Esophagus muscularis mucosa (tissue), 4 donors: ENCODE measurements at regions of chr10 and their contacts with region 1.

Region 1: DNA sequence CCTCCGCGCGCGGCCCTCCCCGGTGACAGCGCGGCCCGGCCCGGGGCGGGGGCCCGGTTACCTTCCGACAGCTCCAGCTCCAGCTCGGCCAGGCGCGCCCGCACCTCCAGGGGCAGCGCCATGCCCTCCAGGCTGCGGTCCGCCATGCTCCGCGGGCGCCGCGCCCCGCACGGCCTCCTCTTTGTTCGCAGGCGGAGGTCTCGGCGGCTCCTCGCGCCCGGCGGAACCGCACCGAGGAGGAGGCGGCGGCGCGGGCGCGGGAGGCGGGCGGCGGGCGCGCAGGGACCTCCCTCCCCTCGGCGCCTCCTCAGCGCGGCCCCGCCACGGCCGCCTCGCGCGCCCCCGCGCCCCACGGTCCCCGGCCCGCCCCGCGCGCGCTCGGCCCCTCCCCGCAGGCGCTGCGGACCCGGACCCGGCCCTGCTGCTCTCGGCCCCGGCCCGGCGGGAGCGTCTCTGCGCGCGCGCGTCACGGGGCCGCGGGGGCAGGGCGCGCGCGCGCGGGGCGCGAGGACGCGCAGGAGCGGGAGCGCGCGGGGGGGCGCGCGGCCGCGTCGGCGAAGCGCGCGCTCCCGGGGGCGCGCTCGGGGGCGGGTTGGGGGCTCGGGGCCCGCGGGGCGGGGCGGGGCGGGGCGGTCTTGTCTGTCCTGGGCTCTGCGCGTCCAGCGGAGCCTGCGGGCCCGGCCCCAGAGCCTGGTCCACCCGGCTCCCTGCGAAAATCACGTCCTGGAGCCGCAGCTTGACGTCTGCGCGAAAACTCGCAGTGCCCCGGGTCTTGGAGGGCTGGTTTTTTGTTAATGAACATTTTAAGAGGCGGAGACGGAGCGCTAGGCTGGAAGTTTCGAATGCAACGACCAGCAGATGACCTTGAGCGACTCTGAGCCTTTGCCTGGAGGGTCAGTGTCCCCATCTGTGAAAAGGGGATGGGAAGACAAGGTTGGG is at the start of gene DIP2C:
- DNase-seq: peak; percentile 92
- H3K4me3 ChIP-seq: peak within 1 kb of the TSS; percentile 76 to 92 (median 86)
- H3K27ac ChIP-seq: peak within 1 kb of the TSS; percentile 85 to 98 (median 96)
- H3K4me1 ChIP-seq: peaks cover 14 to 56% (median 48%) of the 10 kb centered on the region in 4 donors
- H3K27me3 ChIP-seq: no peaks in the 10 kb centered on the region
- CTCF ChIP-seq: no peak
- EP300 ChIP-seq: no peak
- POLR2A ChIP-seq: peak; percentile 14
- total RNA-seq, gene DIP2C: 38.6 to 66.4 (median 55.7) TPM

Region 2: DNA sequence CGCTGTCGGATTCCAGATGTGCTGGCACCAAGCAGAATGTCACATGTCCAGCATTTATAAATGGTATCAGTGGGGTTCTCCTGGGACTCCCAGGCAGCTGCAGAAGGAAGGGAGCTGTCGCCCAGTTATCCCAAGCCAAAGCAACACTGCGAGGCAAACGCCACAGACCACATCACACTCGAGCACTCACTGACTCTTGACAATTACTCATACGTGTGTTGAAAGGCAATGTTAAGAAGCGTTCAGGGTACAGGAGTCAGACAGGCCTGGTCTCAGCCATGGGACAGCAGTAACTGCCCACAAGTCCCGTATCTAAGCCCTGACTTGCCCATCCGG is 113.6 kb before region 1 on chr10:
- intact Hi-C with region 1: no loop called
- DNase-seq: no peak
- H3K4me3 ChIP-seq: no peak overlapping the region
- H3K27ac ChIP-seq: peak overlapping the region in 2 of 4 donors; percentile 4 to 19
- H3K4me1 ChIP-seq: peaks cover 30 to 73% (median 62%) of the 10 kb centered on the region in 4 donors
- H3K27me3 ChIP-seq: no peaks in the 10 kb centered on the region
- CTCF ChIP-seq: no peak
- EP300 ChIP-seq: no peak
- POLR2A ChIP-seq: no peak

Region 3: DNA sequence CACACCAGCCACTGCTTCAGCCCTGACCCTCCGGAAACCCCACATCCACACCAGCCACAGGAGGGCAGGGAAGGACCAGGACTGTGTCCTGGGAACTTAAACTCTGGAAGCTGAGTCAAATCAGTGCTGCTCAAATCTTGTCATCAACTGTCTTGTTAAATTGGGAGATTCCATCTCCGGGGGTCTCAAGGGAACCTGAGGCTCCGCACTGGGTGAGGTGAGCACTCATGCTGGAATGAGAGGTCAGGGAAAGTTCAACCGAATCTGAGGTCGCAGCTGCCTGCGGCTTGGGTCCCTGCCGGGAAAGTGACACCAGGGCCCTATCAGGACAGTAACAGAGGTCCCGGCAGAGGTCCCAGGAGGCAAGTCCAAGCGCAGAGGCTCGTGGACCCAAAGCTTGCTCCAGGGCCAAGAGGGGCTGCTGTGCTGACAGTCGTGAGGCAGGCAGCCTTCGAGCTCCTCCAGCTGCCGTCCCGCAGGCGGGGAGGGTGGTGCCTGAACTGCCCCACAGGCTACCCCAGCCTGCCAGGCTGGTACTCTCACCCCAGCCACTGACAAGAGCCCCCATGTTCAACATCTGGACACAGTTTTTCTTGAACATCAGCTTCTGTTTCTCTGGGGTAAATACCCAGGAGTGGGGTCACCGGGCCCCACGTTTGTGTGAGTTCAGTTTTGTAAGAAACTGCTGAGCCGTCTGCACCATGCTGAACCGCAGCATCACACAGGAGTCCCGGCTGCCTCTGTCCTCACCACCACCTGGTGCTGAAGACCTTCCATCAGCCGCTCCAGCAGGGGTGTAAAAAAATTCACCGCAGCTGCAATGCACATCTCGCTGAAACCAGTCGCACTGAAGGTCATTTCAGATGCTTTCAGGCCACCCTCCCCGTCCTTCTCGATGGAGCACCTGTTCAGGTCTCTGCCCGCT is 101.2 kb before region 1 on chr10:
- intact Hi-C with region 1: no loop called
- DNase-seq: no peak
- H3K4me3 ChIP-seq: no peak overlapping the region
- H3K27ac ChIP-seq: peak overlapping the region in 1 of 4 donors; percentile 33
- H3K4me1 ChIP-seq: peaks cover 30 to 67% (median 47%) of the 10 kb centered on the region in 4 donors
- H3K27me3 ChIP-seq: no peaks in the 10 kb centered on the region
- CTCF ChIP-seq: peak; percentile 22 to 33 (median 31)
- EP300 ChIP-seq: no peak
- POLR2A ChIP-seq: no peak

Region 4: GRCh38 chr10:624605-625332 is 64.9 kb before region 1 on chr10:
- intact Hi-C with region 1: loop called (anchors 10 kb)
- DNase-seq: no peak
- H3K4me3 ChIP-seq: peak overlapping the region; percentile 24 to 32 (median 30)
- H3K27ac ChIP-seq: peak overlapping the region; percentile 80 to 93 (median 88)
- H3K4me1 ChIP-seq: peaks cover 55 to 93% (median 78%) of the 10 kb centered on the region in 4 donors
- H3K27me3 ChIP-seq: no peaks in the 10 kb centered on the region
- CTCF ChIP-seq: no peak
- EP300 ChIP-seq: peak; percentile 86
- POLR2A ChIP-seq: no peak

Region 5: DNA sequence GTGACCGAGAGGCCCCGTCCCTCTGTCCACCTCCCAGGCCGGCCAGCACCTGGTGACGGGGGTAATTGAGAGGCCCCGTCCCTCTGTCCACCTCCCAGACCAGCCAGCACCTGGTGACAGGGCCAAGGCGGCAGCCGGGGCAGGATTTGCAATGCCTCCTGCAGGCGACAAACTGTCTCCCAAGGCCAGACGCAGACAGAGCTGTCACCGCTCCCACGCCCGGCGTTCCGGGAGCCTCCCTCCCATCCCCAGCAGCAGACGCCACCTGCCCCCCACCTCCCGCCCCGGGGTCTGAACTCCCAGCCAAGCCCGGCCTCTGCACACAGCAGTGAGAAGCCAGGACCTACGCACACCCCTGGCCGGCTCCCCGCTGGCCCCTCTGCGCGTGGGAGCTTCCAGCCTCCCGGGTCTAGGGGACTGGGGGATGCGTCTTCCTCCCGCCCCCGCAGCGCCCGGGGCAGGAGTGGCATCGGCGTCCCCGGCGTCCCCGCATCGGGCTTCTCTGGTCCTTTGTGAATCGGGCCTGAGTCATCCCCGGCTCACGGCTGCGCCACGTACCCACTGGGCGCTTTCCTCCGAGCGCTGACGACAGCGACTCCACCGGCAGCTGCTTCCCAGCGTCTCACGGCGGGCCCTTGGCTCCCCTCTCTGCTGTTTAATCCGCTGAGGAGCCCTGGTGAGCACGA is 94.8 kb after region 1 on chr10:
- intact Hi-C with region 1: loop called (anchors 5 kb)
- DNase-seq: peak; percentile 92
- H3K4me3 ChIP-seq: peak overlapping the region; percentile 51 to 60 (median 54)
- H3K27ac ChIP-seq: peak overlapping the region in 2 of 4 donors; percentile 33 to 60
- H3K4me1 ChIP-seq: peaks cover 13 to 28% (median 21%) of the 10 kb centered on the region in 4 donors
- H3K27me3 ChIP-seq: peaks cover 0 to 3% (median 0%) of the 10 kb centered on the region in 4 donors
- CTCF ChIP-seq: peak in 1 of 3 experiments; percentile 17
- EP300 ChIP-seq: no peak
- POLR2A ChIP-seq: no peak